ENCODE measurements at regions of chr19 and their contacts with region 1.

Region 1: GRCh38 chr19:46076951-46077816 is 36.4 kb upstream of the IGFL4 start:
- DNase-seq: peak; percentile 48
- H3K4me3 Mint-ChIP-seq: no peak overlapping the region
- H3K27ac Mint-ChIP-seq: no peak overlapping the region
- H3K4me1 Mint-ChIP-seq: peaks cover 2% of the 10 kb centered on the region
- H3K27me3 Mint-ChIP-seq: peaks cover 76% of the 10 kb centered on the region

Region 2: GRCh38 chr19:46189971-46190888 is 113.0 kb after region 1 on chr19:
- CTCF ChIA-PET with region 1: interaction called, 26 read pairs
- DNase-seq: no peak
- H3K4me3 Mint-ChIP-seq: no peak overlapping the region
- H3K27ac Mint-ChIP-seq: no peak overlapping the region
- H3K4me1 Mint-ChIP-seq: no peaks in the 10 kb centered on the region
- H3K27me3 Mint-ChIP-seq: peaks cover 63% of the 10 kb centered on the region

Region 3: GRCh38 chr19:46265217-46265828 is 188.1 kb after region 1 on chr19:
- CTCF ChIA-PET with region 1: interaction called, 63 read pairs
- DNase-seq: peak; percentile 79
- H3K4me3 Mint-ChIP-seq: no peak overlapping the region
- H3K27ac Mint-ChIP-seq: no peak overlapping the region
- H3K4me1 Mint-ChIP-seq: peaks cover 18% of the 10 kb centered on the region
- H3K27me3 Mint-ChIP-seq: peaks cover 64% of the 10 kb centered on the region

Measured in activated naive CD4-positive, alpha-beta T cell treated with anti-CD3 and anti-CD28 coated beads, Interleukin-2, amount 10 ng/mL, durations not matched to agents 7 days and 5 days (primary cell).